ENCODE measurements at regions of chr15 and their contacts with region 1.

Region 1: DNA sequence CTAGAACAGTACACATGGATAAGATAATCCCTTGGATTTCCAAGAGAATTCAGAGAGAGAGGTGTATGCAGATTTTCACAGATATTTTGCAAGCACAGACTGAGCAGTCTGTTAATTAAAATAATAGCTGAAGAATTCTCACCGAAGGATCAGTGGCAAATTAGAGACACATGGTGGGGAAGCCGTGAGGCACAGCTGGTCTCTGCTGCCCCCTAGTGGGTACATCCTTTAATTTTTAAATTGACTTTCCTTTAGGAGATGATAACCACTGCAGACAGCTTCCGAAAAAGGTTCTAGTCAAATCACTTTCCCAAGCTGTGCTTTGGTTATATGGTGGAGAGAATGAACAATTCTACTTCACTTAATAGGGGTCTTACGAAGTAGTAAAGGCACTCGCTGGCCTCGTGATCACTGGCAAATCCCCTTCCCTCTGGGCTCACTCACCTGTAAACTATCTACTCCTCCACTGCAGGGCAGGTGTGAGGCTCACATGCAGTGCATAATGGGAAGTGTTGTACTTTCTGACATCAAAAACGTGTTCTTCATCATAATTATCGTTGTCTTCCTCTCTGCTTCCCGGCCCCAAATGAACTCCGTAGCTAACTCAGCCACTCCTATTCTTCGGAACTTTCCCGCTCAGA is 19.5 kb downstream of the MESD start:
- DNase-seq: no peak
- H3K4me3 ChIP-seq: no peak overlapping the region
- CTCF ChIP-seq: peak; percentile 63

Region 2: GRCh38 chr15:80418892-80419537 is 551.1 kb before region 1 on chr15:
- CTCF ChIA-PET with region 1: interaction called, 29 read pairs
- POLR2A ChIA-PET with region 1: no interaction called
- DNase-seq: no peak
- H3K4me3 ChIP-seq: no peak overlapping the region
- CTCF ChIP-seq: peak; percentile 73

Region 3: DNA sequence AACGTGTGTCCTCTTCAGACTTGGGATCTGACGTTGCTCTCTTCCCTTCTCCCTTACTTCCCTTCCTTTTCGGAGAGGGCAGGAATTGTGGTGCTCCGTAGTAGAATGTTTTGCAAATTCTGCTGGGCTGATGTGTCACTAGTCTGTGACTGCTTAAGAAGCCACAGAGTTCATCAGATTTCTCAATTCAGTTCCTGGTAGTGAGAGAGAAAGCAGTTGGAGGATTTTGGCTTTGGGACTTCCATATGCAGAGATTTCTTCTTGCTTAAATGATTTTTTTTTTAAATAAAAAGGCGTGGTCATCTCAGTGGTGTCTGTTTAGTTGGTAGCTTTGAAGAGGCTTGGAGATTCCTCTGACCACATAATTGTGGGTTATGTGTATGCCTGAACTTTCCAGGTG is 180.8 kb before region 1 on chr15:
- CTCF ChIA-PET with region 1: interaction called, 52 read pairs
- POLR2A ChIA-PET with region 1: no interaction called
- DNase-seq: no peak
- H3K4me3 ChIP-seq: no peak overlapping the region; the same call in 1 of the 2 replicates
- CTCF ChIP-seq: no peak

Region 4: GRCh38 chr15:80957556-80957955 is 12.6 kb before region 1 on chr15:
- CTCF ChIA-PET with region 1: interaction called, 63 read pairs
- POLR2A ChIA-PET with region 1: interaction called, 4 read pairs
- DNase-seq: no peak
- H3K4me3 ChIP-seq: no peak overlapping the region
- CTCF ChIP-seq: no peak

Region 5: DNA sequence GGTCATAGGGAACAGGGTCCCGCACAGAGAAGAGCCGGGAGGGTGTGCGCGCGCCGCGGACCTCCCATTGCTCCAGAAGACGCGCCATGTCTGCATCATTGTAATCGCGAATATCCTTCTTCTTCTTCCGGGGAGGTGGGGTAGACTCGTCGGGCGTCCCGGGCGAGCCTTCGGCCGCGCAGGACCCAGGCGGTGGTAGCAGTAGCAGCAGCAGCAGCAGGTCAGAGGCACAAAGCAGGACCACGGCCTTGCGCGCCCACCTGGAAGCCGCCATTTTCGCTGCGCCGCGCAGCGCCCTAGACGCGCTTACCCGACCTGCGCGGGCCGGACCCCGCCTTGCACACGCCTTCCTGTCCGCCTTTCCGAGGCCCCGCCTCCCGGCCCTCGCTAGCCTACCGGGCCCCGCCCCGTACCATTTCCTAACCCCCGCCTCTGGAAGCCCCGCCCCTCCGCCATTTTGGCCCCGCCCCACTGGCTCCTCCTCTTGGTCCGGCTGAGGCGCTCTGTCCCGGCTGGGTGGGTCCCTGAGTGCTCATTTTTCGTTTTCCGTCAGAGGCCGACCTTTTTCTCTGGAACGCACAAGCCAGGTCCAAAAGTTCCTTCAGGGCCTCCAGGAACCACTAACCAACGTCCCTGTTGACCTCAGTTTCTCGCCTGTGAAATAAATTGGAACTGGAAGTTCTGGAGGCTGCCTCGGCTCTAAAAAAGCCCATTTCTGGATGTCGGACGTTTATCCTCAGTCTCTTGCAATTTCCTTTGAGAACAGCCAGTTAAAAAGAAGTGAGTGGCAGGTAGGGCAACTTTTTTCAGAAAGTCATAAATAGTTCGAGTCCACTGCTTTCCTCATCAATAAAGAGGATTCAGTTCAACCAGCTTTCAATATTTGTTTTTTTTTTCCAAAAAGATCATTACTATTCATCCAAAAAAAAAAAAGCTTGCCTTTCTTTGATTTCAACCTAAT is 19.7 kb after region 1 on chr15 and contains the start of gene MESD:
- CTCF ChIA-PET with region 1: interaction called, 27 read pairs
- POLR2A ChIA-PET with region 1: no interaction called
- DNase-seq: peak; percentile 46
- H3K4me3 ChIP-seq: peak within 1 kb of the TSS; percentile 90
- CTCF ChIP-seq: no peak

Region 6: DNA sequence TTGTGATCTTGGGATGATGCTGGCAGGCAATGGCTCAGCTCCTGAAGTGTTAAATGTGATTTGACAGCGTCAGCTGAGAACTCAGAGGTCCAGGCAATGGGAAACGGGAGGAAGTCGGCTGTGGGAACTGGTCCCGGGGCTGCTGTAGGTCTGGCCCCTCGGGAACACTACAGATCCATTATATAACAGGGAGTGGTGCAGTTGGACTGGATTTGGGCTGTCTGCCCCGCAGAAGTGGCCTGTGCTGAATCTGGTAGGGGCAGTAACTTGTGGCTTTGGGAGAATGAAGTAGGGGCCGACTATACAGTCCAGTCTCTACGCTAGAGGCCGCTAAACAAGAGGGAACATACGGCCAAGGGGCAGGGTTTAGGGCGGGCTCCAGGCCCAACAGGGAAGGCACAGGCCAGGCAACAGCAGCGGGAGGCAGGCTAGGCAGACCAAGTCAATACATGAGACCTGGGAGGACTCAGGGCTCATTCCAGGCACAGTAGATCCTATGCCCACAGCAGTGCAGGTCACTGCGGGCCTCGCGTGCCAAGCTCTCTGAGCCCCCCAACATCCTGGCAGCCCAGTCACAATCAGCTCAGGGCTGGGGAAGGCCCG is 206.3 kb after region 1 on chr15:
- CTCF ChIA-PET with region 1: no interaction called
- POLR2A ChIA-PET with region 1: no interaction called
- DNase-seq: no peak
- H3K4me3 ChIP-seq: no peak overlapping the region
- CTCF ChIP-seq: no peak